Activated B cell treated with CpG ODN at 0.5 μM for 24 hours (primary cell): ENCODE measurements at regions of chr10 and their contacts with region 1.

Region 1: GRCh38 chr10:14604181-14605142 is 170.2 kb downstream of the FAM107B start:
- DNase-seq: peak; percentile 72
- ATAC-seq: peak; percentile 55
- H3K4me3 Mint-ChIP-seq: peak overlapping the region; percentile 86
- H3K27ac Mint-ChIP-seq: peak overlapping the region; percentile 94
- H3K4me1 Mint-ChIP-seq: peaks cover 68% of the 10 kb centered on the region
- H3K27me3 Mint-ChIP-seq: no peaks in the 10 kb centered on the region
- CTCF ChIP-seq: no peak

Region 2: DNA sequence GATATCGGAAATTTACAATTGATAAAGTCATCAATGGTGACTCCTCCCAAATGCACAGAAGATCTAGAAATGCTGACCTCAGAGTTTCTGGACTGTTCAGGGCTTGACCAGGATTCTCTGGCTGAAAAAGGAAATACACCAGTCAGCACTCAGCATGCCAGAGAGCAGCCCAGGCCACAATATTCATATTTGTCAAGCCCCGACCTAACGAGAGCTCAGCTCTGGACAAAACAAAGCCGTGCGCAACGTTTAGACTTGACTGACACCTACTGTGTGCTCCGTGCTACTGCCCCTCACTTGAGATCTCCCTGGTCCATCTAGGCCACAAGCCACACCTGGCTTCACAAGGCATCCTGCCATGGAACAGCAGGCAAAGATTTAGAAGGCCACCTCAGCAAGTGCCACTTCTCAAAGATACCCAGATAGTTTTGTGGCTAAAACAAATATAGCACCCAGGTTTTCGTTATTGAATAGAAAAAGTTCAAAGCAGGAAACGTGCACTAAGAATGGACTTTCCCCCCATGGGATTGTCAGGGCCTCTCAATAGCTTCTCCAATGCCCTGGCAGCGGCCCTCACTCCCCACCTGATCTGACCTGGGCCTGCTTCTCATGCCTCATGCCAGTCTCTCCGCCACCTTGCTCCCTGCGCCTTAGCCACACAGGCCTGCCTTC is 48.0 kb before region 1 on chr10:
- CTCF ChIA-PET with region 1: interaction called, 7 read pairs
- POLR2A ChIA-PET with region 1: interaction called, 9 read pairs
- intact Hi-C with region 1: loop called (anchors 1 kb)
- DNase-seq: no peak
- ATAC-seq: peak; percentile 49
- H3K4me3 Mint-ChIP-seq: peak overlapping the region; percentile 59
- H3K27ac Mint-ChIP-seq: peak overlapping the region; percentile 91
- H3K4me1 Mint-ChIP-seq: peaks cover 96% of the 10 kb centered on the region
- H3K27me3 Mint-ChIP-seq: no peaks in the 10 kb centered on the region
- CTCF ChIP-seq: no peak

Region 3: GRCh38 chr10:14623931-14624330 is 19.5 kb after region 1 on chr10:
- CTCF ChIA-PET with region 1: no interaction called
- POLR2A ChIA-PET with region 1: interaction called, 3 read pairs
- intact Hi-C with region 1: loop called (anchors 2 kb)
- DNase-seq: no peak
- ATAC-seq: no peak
- H3K4me3 Mint-ChIP-seq: no peak overlapping the region
- H3K27ac Mint-ChIP-seq: no peak overlapping the region
- H3K4me1 Mint-ChIP-seq: peaks cover 6% of the 10 kb centered on the region
- H3K27me3 Mint-ChIP-seq: no peaks in the 10 kb centered on the region
- CTCF ChIP-seq: no peak

Region 4: DNA sequence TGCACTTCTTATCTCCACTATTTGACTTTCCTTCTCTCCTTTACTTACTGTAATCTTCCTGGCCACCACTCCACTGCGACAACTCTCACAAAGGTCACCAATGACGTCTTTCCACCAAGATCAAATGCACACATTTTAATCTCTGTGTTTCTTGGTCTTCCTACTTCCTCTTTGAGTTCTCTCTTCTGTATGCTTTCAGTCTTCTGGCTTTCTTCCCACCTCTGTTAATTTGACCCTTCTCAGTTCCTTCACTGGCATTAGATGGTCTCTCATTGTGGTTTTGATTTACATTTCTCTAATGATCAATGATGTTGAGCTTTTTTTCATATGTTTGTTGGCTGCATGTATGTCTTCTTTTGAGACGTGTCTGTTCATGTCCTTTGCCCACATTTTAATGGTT is 138.4 kb after region 1 on chr10:
- CTCF ChIA-PET with region 1: interaction called, 4 read pairs
- POLR2A ChIA-PET with region 1: interaction called, 58 read pairs
- intact Hi-C with region 1: loop called (anchors 1 kb)
- DNase-seq: no peak
- ATAC-seq: peak; percentile 83
- H3K4me3 Mint-ChIP-seq: peak overlapping the region; percentile 64
- H3K27ac Mint-ChIP-seq: peak overlapping the region; percentile 89
- H3K4me1 Mint-ChIP-seq: peaks cover 96% of the 10 kb centered on the region
- H3K27me3 Mint-ChIP-seq: no peaks in the 10 kb centered on the region
- CTCF ChIP-seq: no peak

Region 5: DNA sequence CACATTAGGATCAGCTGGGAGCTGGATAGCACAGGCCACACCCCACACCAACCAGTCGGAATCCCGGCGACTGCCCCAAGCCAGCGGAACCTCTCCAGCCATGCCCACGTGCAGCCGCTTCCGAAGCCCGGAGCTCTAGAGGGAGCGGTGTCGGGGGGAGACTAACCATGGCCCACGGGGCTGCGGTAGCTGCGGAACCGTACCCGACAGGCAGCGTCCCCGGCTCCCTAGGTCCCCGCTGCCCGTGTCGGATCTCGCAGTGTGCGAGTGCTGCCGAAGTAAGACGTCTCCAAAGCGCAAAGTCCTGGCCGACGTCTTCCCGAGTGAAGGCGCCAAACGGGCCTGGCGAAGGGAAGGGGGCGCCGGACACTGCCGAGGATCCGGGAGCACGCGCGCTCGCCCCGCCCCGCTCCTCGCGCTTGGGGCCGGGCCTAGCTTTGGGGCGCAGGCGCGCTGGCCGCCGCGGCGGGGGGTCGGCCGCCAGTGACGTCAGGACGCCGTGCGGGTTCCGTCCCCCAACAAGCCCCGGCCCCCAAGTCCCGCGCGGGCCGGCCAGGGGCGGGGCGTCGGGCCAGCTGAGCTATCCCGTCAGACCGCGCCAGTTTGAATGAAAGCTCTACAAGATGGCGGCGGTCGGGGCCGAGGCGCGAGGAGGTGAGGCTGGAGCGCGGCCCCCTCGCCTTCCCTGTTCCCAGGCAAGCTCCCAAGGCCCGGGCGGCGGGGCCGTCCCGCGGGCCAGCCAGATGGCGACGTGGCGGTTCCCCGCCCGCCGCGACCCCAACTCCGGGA is 274.0 kb after region 1 on chr10 and contains the start of gene SUV39H2:
- CTCF ChIA-PET with region 1: no interaction called
- POLR2A ChIA-PET with region 1: interaction called, 4 read pairs
- intact Hi-C with region 1: loop called (anchors 1 kb)
- DNase-seq: peak; percentile 93
- ATAC-seq: peak; percentile 93
- H3K4me3 Mint-ChIP-seq: peak within 1 kb of the TSS; percentile 94
- H3K27ac Mint-ChIP-seq: peak within 1 kb of the TSS; percentile 86
- H3K4me1 Mint-ChIP-seq: peaks cover 25% of the 10 kb centered on the region
- H3K27me3 Mint-ChIP-seq: no peaks in the 10 kb centered on the region
- CTCF ChIP-seq: no peak
- total RNA-seq, gene SUV39H2: 7.4 and 8.1 TPM in 2 replicates

Region 6: GRCh38 chr10:15141136-15142054 is 536.9 kb after region 1 on chr10:
- CTCF ChIA-PET with region 1: no interaction called
- POLR2A ChIA-PET with region 1: no interaction called
- intact Hi-C with region 1: loop called (anchors 5 kb)
- DNase-seq: peak; percentile 32
- ATAC-seq: peak; percentile 94
- H3K4me3 Mint-ChIP-seq: peak overlapping the region; percentile 74
- H3K27ac Mint-ChIP-seq: peak overlapping the region; percentile 69
- H3K4me1 Mint-ChIP-seq: peaks cover 40% of the 10 kb centered on the region
- H3K27me3 Mint-ChIP-seq: no peaks in the 10 kb centered on the region
- CTCF ChIP-seq: no peak